Activated CD4-positive, alpha-beta T cell treated with anti-CD3 and anti-CD28 coated beads for 36 hours (primary cell): ENCODE measurements at regions of chr7 and their contacts with region 1.

Region 1: DNA sequence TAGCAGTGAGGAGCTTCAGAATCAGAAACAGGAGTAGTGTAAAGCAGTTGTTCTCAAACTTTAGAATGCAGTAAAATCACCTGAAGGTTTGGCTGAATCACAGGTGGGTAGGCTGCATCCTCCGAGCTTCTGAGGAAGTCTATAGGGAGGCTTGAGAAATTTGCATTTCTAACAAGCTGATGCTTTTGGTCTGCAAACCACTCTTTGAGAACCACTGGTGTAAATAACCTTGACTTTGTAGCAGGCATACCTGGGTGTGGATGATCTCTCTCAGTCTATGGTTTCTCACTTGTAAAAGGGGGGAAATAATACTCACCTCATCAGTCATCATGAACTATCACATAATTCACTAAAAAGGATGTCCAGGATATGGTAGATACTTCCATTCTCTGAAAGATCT is 118.1 kb downstream of the SRI start:
- DNase-seq: no peak
- ATAC-seq: no peak
- H3K4me3 Mint-ChIP-seq: no peak overlapping the region
- H3K27ac Mint-ChIP-seq: no peak overlapping the region
- H3K4me1 Mint-ChIP-seq: peaks cover 7% of the 10 kb centered on the region
- H3K27me3 Mint-ChIP-seq: no peaks in the 10 kb centered on the region

Region 2: GRCh38 chr7:87312215-87312865 is 789.4 kb before region 1 on chr7:
- CTCF ChIA-PET with region 1: no interaction called
- POLR2A ChIA-PET with region 1: no interaction called
- intact Hi-C with region 1: loop called in 1 of 2 experiments (anchors 10 kb)
- DNase-seq: peak; percentile 76
- ATAC-seq: peak; percentile 86
- H3K4me3 Mint-ChIP-seq: no peak overlapping the region
- H3K27ac Mint-ChIP-seq: no peak overlapping the region
- H3K4me1 Mint-ChIP-seq: peaks cover 11% of the 10 kb centered on the region
- H3K27me3 Mint-ChIP-seq: no peaks in the 10 kb centered on the region

Region 3: DNA sequence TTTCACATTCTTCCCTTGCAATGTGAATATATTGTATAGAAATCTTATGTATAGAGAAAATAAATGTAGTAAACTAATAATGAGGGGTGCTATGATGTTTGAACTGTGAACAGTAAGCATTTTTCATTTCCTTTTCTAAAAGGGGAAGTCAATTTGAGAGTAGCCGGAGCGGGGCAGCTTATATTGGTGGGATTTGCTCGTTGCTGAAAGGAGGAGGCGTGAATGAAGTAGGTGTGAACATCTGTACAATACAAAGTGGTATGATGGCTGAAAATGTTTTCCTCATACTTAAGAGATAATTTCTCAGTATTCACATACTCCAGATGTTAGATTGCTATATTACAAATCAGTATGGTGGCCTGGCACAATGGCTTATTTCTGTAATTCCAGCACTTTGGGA is 31.0 kb after region 1 on chr7:
- CTCF ChIA-PET with region 1: no interaction called
- POLR2A ChIA-PET with region 1: no interaction called
- intact Hi-C with region 1: loop called in 1 of 2 experiments (anchors 1 kb)
- DNase-seq: no peak
- ATAC-seq: no peak
- H3K4me3 Mint-ChIP-seq: no peak overlapping the region
- H3K27ac Mint-ChIP-seq: no peak overlapping the region
- H3K4me1 Mint-ChIP-seq: no peaks in the 10 kb centered on the region
- H3K27me3 Mint-ChIP-seq: no peaks in the 10 kb centered on the region